AG04449 (cell line): ENCODE measurements at regions of chr18 and their contacts with region 1.

Region 1: GRCh38 chr18:623761-624620 is 27.2 kb downstream of the CLUL1 start:
- DNase-seq: peak; percentile 7
- H3K4me3 ChIP-seq: no peak overlapping the region
- CTCF ChIP-seq: peak; percentile 72

Region 2: DNA sequence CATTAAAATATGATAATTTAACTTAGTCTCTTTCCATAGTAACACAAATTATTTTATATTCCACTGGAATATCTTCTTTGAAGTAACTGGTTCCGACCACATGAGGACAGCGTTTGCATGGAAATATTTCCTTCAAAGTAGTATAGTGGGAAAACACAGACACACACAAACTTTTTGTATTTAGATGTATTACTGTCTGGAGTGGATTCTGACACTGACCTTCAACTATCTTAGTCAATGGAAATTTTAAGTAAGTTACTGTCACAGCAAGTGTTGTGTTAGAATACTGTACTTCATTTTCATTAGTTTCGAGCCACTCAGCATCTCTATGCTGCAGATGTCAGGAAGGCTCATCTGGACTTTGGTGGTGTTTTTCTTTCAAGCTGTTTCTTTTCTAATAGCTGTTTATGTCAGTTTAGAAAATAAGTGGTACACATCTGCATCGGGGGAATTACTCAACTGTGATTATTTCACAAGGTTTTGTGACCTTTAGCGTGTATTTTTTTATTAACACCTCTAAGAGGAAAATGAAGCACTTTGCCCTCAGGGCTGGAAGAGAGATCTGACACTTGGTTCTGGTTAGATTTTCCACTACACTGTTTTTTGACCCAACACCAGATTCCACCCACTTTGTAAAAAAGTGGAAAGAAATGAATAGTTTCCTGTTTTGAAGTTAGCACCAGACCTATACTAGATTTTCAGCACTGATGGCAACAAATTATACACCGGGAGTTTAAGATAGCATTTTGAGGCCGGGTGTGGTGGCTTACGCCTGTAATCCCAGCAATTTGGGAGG is 337.3 kb before region 1 on chr18:
- CTCF ChIA-PET with region 1: interaction called, 242 read pairs
- POLR2A ChIA-PET with region 1: no interaction called
- DNase-seq: no peak
- H3K4me3 ChIP-seq: no peak overlapping the region
- CTCF ChIP-seq: peak; percentile 50

Region 3: DNA sequence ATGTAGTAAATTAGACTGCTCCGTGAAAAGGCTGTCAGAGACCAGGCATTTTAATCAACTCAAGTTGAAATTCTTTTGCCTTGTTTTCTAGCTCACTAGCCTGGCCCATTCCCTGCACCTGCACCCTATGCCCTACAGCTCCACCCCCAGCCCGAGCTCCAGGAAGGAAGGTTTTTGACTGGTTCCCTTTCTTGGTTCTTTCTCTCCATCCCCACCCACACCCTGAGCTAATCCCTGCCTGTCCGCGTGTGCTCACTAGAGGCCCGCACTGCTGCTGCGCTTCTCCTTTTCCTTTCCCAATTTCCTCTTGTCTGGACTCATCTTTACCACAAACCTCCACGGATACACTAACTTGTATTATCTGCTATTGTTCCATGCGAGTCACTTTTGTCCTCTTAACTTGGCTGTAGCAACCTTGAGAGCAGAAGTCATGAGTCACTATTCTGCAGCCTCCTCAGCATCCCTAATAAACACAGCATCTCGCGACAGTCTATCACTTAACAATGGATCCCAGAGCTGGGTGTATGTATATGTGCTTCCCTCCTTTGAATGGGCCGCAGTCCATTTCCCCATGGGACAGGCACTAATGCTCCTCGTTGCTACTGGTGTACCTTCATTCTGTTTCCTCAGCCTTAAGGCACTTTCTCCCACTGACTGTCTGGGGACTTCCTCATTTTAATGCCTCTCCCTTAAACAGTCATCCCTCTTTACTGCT is 160.0 kb before region 1 on chr18:
- CTCF ChIA-PET with region 1: no interaction called
- POLR2A ChIA-PET with region 1: no interaction called
- DNase-seq: no peak
- H3K4me3 ChIP-seq: no peak overlapping the region
- CTCF ChIP-seq: no peak

Region 4: DNA sequence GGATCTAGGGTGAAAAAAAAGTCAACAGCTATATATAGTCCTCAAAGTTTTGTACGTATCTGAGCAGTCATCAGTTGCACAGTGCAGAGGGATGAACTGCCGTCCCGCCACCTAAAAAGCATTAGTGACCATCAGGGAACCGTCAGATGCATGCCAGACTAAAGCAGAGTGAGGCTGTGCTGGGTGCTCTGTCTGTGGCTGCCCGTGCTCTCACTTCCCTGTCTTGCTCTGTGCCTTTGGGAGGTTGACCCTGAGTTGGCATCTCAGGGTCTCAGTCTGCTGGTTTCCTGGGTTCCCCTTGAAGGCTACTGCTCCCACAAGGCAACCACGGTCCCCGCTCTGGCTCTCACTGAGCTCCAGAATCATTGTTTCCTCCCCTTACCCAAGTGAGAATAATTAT is 16.1 kb before region 1 on chr18:
- CTCF ChIA-PET with region 1: interaction called, 32 read pairs
- POLR2A ChIA-PET with region 1: no interaction called
- DNase-seq: no peak
- H3K4me3 ChIP-seq: no peak overlapping the region
- CTCF ChIP-seq: no peak

Region 5: DNA sequence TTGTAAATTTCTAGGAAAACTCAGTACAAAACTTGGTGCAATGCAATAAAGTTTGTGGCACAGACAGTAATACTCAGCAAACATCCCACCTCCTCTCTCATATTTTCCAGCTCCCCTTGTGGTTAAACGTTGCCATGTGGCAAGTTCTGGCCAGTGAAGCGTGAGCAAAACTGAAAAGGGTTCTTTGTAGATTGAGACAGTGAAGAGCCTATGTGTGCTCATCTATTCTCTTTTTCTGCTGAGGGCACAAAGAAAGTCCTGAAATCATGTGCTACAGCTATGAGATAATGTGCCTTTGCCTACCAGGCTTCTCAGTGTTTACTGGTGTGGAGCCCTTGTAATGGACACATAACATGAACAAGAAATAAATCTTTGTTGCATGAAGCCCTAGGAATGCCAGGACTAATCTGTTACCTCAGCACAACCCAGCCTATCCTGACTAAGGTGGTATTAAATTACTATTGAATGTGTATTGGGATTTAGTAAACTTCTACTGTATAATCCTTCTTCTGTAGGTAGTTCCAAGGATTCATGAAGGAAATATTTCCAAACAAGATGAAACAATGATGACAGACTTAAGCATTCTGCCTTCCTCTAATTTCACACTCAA is 20.5 kb after region 1 on chr18:
- CTCF ChIA-PET with region 1: interaction called, 15 read pairs
- POLR2A ChIA-PET with region 1: no interaction called
- DNase-seq: no peak
- H3K4me3 ChIP-seq: no peak overlapping the region
- CTCF ChIP-seq: no peak

Region 6: DNA sequence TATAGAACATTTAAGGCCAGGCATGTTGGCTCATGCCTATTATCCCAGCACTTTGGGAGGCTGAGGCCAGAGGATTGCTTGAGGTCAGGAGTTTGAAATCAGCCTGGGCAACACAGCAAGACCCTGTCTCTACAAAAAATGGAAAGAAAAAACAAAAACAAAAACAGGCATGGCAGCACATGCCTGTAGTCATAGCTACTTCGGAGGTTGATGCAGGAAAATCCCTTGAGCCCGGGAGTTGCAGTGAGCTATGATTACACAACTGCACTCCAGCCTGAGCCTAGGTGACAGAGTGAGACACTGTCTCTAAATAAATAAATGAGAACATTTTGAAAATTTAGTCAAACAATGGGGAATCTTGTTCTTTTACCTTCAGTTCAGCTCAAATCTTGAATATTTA is 200.2 kb after region 1 on chr18:
- CTCF ChIA-PET with region 1: interaction called, 448 read pairs
- POLR2A ChIA-PET with region 1: no interaction called
- DNase-seq: no peak
- H3K4me3 ChIP-seq: no peak overlapping the region
- CTCF ChIP-seq: no peak